ENCODE measurements at regions of chr4 and their contacts with region 1.

Region 1: DNA sequence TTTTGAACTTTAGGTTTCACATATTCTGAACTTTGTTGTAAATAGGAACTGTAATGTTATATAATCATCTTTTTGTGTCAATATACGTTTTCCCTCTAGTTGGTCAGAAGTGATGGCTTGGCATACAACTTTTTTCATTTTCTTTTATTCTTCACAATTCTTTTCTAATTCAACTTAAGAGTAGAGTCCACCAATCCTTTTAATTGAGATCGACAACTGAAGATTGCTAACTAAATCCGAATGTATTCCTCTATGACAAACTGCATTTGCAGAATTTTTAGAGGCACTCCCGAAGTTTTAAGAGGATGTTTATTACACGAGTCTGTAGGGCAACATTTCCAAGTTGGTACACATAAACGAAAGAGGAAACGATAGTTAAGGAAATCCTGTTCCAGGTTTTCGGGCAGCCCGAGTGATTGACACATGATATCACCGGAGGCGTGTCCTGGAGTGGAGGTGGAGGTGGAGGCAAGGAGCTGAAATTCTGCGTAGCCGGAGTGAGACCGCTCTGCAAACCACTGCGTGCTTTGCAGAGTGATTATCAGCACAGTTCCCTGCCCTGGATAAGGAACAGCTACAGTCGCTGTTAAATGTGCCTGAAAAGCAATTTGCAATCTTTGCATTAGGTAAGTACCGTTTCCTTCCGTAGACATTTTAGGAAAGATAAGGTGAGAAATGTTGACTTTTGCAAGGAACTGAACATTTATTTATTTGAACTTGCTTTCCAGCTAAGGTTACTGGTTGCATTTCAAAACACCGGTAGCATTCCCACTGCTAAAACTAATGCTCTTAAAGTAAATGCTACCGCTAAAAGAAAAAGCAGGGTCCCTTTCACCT is at the start of gene SPRY1:
- DNase-seq: peak; percentile 88 to 92
- H3K4me3 ChIP-seq: peak within 1 kb of the TSS; percentile 86
- H3K4me3 Mint-ChIP-seq: peak within 1 kb of the TSS; percentile 80
- H3K27ac Mint-ChIP-seq: peak within 1 kb of the TSS; percentile 67
- H3K4me1 ChIP-seq: 0 out of 2 replicates have a peak, but pooled peaks cover 6% of the 10 kb centered on the region
- H3K4me1 Mint-ChIP-seq: peaks cover 5% of the 10 kb centered on the region
- H3K27me3 ChIP-seq: no peaks in the 10 kb centered on the region
- H3K27me3 Mint-ChIP-seq: no peaks in the 10 kb centered on the region
- CTCF ChIP-seq: no peak
- total RNA-seq, gene SPRY1: 23.2 and 23.4 TPM in 2 replicates

Region 2: DNA sequence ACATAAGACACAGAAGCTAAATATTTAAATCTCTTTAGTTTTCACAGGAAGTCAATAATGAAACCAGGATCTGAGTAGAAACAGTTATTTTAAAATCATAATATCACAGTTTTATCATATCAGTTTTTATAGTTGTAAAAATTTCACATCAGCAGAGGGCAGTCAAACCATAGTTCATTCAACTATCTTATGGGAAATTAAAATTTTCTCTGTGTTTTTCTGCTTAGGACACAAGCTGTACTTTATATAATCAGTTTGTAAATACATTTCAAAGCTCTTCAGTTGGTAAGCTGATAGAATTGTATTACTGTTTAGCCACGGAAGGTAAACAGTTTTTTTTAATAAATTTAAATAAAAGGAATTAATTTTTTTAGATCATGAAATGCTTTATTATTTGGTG is 269.3 kb before region 1 on chr4:
- CTCF ChIA-PET with region 1: no interaction called
- POLR2A ChIA-PET with region 1: no interaction called
- intact Hi-C with region 1: loop called (anchors 2 kb)
- DNase-seq: no peak
- H3K4me3 ChIP-seq: no peak overlapping the region
- H3K4me3 Mint-ChIP-seq: no peak overlapping the region
- H3K27ac Mint-ChIP-seq: no peak overlapping the region
- H3K4me1 ChIP-seq: 0 out of 2 replicates have a peak, but pooled peaks cover 8% of the 10 kb centered on the region
- H3K4me1 Mint-ChIP-seq: no peaks in the 10 kb centered on the region
- H3K27me3 ChIP-seq: no peaks in the 10 kb centered on the region
- H3K27me3 Mint-ChIP-seq: no peaks in the 10 kb centered on the region
- CTCF ChIP-seq: no peak

Region 3: DNA sequence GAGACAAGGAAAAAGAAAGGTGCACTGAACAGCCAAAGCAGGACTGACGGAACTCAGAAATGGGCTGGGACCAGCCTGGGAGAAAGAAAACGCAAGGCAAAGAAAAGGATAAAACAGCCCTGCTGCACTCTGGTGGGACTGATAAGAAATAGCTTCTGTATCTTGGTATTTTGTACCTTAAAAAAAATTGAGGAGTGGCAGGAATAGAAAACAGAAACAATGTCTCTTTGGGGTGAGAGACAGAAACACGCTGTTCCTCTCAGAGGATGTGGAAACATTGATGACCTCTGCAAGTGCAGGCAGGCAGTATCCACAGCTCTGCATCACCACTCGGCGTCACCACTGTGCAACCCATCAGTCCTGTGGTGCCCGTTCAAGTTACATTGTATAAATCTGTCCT is 152.4 kb before region 1 on chr4:
- CTCF ChIA-PET with region 1: no interaction called
- POLR2A ChIA-PET with region 1: no interaction called
- intact Hi-C with region 1: no loop called
- DNase-seq: peak in 1 of 2 experiments; percentile 3
- H3K4me3 ChIP-seq: no peak overlapping the region
- H3K4me3 Mint-ChIP-seq: no peak overlapping the region
- H3K27ac Mint-ChIP-seq: no peak overlapping the region
- H3K4me1 ChIP-seq: no peaks in the 10 kb centered on the region
- H3K4me1 Mint-ChIP-seq: no peaks in the 10 kb centered on the region
- H3K27me3 ChIP-seq: no peaks in the 10 kb centered on the region
- H3K27me3 Mint-ChIP-seq: no peaks in the 10 kb centered on the region
- CTCF ChIP-seq: no peak

Region 4: GRCh38 chr4:123444290-123444731 is 47.8 kb after region 1 on chr4:
- CTCF ChIA-PET with region 1: interaction called, 7 read pairs
- POLR2A ChIA-PET with region 1: interaction called, 5 read pairs
- intact Hi-C with region 1: loop called (anchors 2 kb)
- DNase-seq: peak; percentile 82 to 90
- H3K4me3 ChIP-seq: peak overlapping the region; percentile 10; the same call in 1 of the 2 replicates
- H3K4me3 Mint-ChIP-seq: peak overlapping the region; percentile 49
- H3K27ac Mint-ChIP-seq: peak overlapping the region; percentile 40
- H3K4me1 ChIP-seq: peaks cover 19% of the 10 kb centered on the region
- H3K4me1 Mint-ChIP-seq: peaks cover 3% of the 10 kb centered on the region
- H3K27me3 ChIP-seq: no peaks in the 10 kb centered on the region
- H3K27me3 Mint-ChIP-seq: no peaks in the 10 kb centered on the region
- CTCF ChIP-seq: no peak

Region 5: GRCh38 chr4:123505095-123506010 is 108.8 kb after region 1 on chr4:
- CTCF ChIA-PET with region 1: no interaction called
- POLR2A ChIA-PET with region 1: no interaction called
- intact Hi-C with region 1: loop called (anchors 1 kb)
- DNase-seq: peak; percentile 76 to 80
- H3K4me3 ChIP-seq: peak overlapping the region; percentile 40
- H3K4me3 Mint-ChIP-seq: peak overlapping the region; percentile 79
- H3K27ac Mint-ChIP-seq: peak overlapping the region; percentile 91
- H3K4me1 ChIP-seq: peaks cover 30% of the 10 kb centered on the region
- H3K4me1 Mint-ChIP-seq: peaks cover 13% of the 10 kb centered on the region
- H3K27me3 ChIP-seq: no peaks in the 10 kb centered on the region
- H3K27me3 Mint-ChIP-seq: no peaks in the 10 kb centered on the region
- CTCF ChIP-seq: no peak

Region 6: DNA sequence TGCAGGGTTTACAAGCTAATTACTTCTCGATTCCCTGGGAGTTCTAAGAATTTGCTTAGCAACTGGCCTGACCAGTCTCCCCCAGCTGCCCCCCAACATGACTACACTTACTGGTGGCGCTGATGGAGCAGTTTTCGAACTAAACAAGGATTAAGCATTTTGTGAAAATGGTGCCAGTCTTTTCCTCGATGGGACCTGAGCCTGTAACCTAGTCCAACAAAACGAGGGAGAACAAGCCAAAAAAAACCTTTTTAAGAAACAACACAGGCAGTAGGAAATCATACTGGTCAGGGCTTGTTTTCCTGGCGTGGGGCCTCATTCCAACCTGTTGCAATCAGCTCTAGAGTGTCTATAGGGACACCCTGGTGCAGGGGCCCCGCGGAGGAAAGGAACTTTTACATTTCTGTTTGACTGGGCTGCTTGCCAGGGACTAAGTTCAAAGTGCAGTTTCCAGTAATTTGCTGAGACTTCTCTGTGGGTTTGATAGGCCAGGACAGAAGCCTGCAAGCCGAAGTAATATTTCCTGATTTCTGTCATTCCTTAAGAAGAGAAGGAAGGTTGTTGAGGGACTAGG is 158.8 kb after region 1 on chr4:
- CTCF ChIA-PET with region 1: interaction called, 4 read pairs
- POLR2A ChIA-PET with region 1: interaction called, 4 read pairs
- intact Hi-C with region 1: loop called (anchors 2 kb)
- DNase-seq: peak; percentile 90 to 94
- H3K4me3 ChIP-seq: no peak overlapping the region
- H3K4me3 Mint-ChIP-seq: peak overlapping the region; percentile 73
- H3K27ac Mint-ChIP-seq: peak overlapping the region; percentile 95
- H3K4me1 ChIP-seq: peaks cover 56% of the 10 kb centered on the region
- H3K4me1 Mint-ChIP-seq: peaks cover 55% of the 10 kb centered on the region
- H3K27me3 ChIP-seq: no peaks in the 10 kb centered on the region
- H3K27me3 Mint-ChIP-seq: no peaks in the 10 kb centered on the region
- CTCF ChIP-seq: no peak

Region 7: GRCh38 chr4:123661080-123661737 is 264.7 kb after region 1 on chr4:
- CTCF ChIA-PET with region 1: interaction called, 3 read pairs
- POLR2A ChIA-PET with region 1: no interaction called
- intact Hi-C with region 1: loop called (anchors 1 kb)
- DNase-seq: no peak
- H3K4me3 ChIP-seq: no peak overlapping the region
- H3K4me3 Mint-ChIP-seq: no peak overlapping the region
- H3K27ac Mint-ChIP-seq: no peak overlapping the region
- H3K4me1 ChIP-seq: peaks cover 6% of the 10 kb centered on the region; the same call in 1 of the 2 replicates
- H3K4me1 Mint-ChIP-seq: peaks cover 20% of the 10 kb centered on the region
- H3K27me3 ChIP-seq: no peaks in the 10 kb centered on the region
- H3K27me3 Mint-ChIP-seq: no peaks in the 10 kb centered on the region
- CTCF ChIP-seq: peak; percentile 41 to 54

Measured in Caco-2 (cell line).